ENCODE measurements at regions of chr4 and their contacts with region 1.

Region 1: DNA sequence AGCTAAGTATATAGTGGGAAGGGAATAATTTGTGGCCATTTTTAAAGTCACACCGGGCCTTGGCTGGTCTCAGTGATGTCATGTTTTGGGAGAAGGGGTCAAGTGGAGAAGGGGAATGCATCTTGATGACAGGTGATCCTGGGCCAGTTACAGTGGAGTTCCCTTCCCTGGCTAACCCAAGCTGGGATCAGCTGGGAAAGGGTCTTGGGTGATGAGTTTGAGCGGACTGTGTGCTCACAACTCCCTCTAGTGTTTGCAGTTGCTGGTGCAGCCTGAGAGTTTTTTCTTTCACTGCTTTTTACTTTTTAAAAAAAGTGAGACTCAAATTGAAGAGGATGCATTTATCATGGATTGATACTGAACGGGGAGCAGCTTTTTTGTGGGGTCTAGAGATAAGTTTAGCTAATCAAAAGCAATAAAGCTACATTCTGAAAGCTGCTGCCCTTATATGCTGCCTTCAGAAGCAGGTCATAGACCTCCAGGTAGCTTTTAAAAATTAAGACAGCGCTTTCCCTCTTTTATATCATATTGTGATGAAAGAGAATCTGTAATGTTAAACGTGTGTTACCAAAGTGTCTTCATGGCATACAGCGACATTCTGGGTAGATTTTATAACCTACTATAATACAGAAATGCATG is 164.7 kb downstream of the DCLK2 start:
- DNase-seq: peak; percentile 49
- H3K4me3 Mint-ChIP-seq: no peak overlapping the region
- H3K27ac Mint-ChIP-seq: no peak overlapping the region
- H3K4me1 Mint-ChIP-seq: peaks cover 4% of the 10 kb centered on the region
- H3K27me3 Mint-ChIP-seq: no peaks in the 10 kb centered on the region
- CTCF ChIP-seq: peak; percentile 86

Region 2: DNA sequence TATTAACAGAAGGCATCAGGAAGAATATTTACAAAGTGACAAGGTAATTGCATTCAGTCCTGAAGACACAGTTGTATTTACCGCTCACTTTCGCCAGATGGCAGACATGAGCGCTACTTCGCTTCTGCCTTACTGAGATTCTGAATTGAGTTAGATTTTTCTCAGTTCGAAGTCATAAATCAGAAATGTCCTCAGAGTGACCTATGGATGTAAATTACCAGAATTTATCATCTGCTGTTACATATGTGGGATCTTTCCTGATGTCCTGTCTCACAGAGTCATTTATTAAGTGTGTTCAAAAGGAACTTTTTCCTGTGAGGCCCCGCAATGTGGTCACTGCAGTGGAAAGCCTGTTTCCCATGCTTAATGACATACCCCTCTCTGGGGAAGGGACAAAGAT is 262.0 kb before region 1 on chr4:
- CTCF ChIA-PET with region 1: interaction called, 19 read pairs
- POLR2A ChIA-PET with region 1: no interaction called
- intact Hi-C with region 1: no loop called
- DNase-seq: peak; percentile 72
- H3K4me3 Mint-ChIP-seq: no peak overlapping the region
- H3K27ac Mint-ChIP-seq: no peak overlapping the region
- H3K4me1 Mint-ChIP-seq: no peaks in the 10 kb centered on the region
- H3K27me3 Mint-ChIP-seq: no peaks in the 10 kb centered on the region
- CTCF ChIP-seq: peak; percentile 66

Region 3: GRCh38 chr4:149999485-150000074 is 243.4 kb before region 1 on chr4:
- CTCF ChIA-PET with region 1: interaction called, 191 read pairs
- POLR2A ChIA-PET with region 1: no interaction called
- intact Hi-C with region 1: loop called (anchors 1 kb)
- DNase-seq: peak; percentile 69
- H3K4me3 Mint-ChIP-seq: no peak overlapping the region
- H3K27ac Mint-ChIP-seq: no peak overlapping the region
- H3K4me1 Mint-ChIP-seq: peaks cover 22% of the 10 kb centered on the region
- H3K27me3 Mint-ChIP-seq: no peaks in the 10 kb centered on the region
- CTCF ChIP-seq: peak; percentile 63

Region 4: DNA sequence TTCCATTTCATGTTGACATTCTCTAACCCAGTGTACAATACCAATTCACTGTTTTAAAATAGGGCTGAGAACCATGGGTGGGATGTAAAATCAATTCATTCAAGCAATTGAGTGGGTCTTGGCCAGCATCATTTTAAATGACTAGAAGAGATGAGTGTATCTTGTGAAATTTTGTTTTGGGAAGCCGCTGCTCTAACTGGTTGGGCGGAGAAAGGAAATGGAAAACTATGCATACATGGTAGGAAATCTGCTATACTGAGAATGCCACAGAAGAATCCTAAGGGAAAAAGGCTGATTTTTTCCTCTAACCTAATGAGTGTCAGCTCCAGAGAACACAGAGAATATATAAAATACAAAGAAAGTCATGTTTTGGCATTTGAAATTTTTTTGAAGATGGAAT is 219.4 kb before region 1 on chr4:
- CTCF ChIA-PET with region 1: interaction called, 17 read pairs
- POLR2A ChIA-PET with region 1: no interaction called
- intact Hi-C with region 1: no loop called
- DNase-seq: no peak
- H3K4me3 Mint-ChIP-seq: no peak overlapping the region
- H3K27ac Mint-ChIP-seq: no peak overlapping the region
- H3K4me1 Mint-ChIP-seq: no peaks in the 10 kb centered on the region
- H3K27me3 Mint-ChIP-seq: no peaks in the 10 kb centered on the region
- CTCF ChIP-seq: no peak

Region 5: DNA sequence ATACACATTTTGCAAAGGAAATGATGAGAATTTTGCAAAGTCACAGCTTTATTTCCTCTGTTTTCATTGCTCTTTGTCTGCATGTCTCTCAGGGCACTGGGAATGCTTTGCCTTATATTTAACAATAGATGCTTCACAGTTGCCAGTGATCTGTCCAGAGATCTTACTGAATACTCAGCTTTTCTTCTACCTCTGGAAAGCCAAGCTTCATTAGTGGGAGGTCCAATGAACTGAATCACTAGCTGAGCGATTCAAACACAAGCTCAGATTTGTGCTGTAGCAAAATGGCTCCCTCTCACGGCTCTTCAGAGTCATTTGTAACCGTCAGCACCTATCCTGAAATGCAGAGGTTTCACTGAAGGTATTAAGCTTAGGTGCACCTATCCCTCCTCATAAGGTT is 25.7 kb before region 1 on chr4:
- CTCF ChIA-PET with region 1: interaction called, 17 read pairs
- POLR2A ChIA-PET with region 1: no interaction called
- intact Hi-C with region 1: no loop called
- DNase-seq: peak; percentile 61
- H3K4me3 Mint-ChIP-seq: no peak overlapping the region
- H3K27ac Mint-ChIP-seq: no peak overlapping the region
- H3K4me1 Mint-ChIP-seq: peaks cover 16% of the 10 kb centered on the region
- H3K27me3 Mint-ChIP-seq: no peaks in the 10 kb centered on the region
- CTCF ChIP-seq: peak; percentile 49

Region 6: GRCh38 chr4:150256841-150257730 is 14.1 kb after region 1 on chr4:
- CTCF ChIA-PET with region 1: interaction called, 28 read pairs
- POLR2A ChIA-PET with region 1: interaction called, 4 read pairs
- intact Hi-C with region 1: no loop called
- DNase-seq: peak; percentile 36
- H3K4me3 Mint-ChIP-seq: no peak overlapping the region
- H3K27ac Mint-ChIP-seq: no peak overlapping the region
- H3K4me1 Mint-ChIP-seq: peaks cover 19% of the 10 kb centered on the region
- H3K27me3 Mint-ChIP-seq: no peaks in the 10 kb centered on the region
- CTCF ChIP-seq: no peak

Measured in MCF 10A (cell line).